CD4-positive, alpha-beta memory T cell (primary cell): ENCODE measurements at regions of chr1 and their contacts with region 1.

Region 1: GRCh38 chr1:54764133-54764921 is at the start of gene PARS2:
- DNase-seq: peak; percentile 92 to 98 (median 98)
- H3K4me3 ChIP-seq: peak within 1 kb of the TSS; percentile 92 to 100
- H3K4me3 Mint-ChIP-seq: peak within 1 kb of the TSS; percentile 92 to 98 (median 94)
- H3K27ac ChIP-seq: peak within 1 kb of the TSS; percentile 71
- H3K27ac Mint-ChIP-seq: peak within 1 kb of the TSS; percentile 84 to 97 (median 93)
- H3K4me1 ChIP-seq: peaks cover 11% of the 10 kb centered on the region
- H3K4me1 Mint-ChIP-seq: peaks cover 8 to 27% (median 19%) of the 10 kb centered on the region in 4 donors
- H3K27me3 ChIP-seq: no peaks in the 10 kb centered on the region
- H3K27me3 Mint-ChIP-seq: no peaks in the 10 kb centered on the region
- total RNA-seq, gene PARS2: 5.0 to 6.0 TPM

Region 2: DNA sequence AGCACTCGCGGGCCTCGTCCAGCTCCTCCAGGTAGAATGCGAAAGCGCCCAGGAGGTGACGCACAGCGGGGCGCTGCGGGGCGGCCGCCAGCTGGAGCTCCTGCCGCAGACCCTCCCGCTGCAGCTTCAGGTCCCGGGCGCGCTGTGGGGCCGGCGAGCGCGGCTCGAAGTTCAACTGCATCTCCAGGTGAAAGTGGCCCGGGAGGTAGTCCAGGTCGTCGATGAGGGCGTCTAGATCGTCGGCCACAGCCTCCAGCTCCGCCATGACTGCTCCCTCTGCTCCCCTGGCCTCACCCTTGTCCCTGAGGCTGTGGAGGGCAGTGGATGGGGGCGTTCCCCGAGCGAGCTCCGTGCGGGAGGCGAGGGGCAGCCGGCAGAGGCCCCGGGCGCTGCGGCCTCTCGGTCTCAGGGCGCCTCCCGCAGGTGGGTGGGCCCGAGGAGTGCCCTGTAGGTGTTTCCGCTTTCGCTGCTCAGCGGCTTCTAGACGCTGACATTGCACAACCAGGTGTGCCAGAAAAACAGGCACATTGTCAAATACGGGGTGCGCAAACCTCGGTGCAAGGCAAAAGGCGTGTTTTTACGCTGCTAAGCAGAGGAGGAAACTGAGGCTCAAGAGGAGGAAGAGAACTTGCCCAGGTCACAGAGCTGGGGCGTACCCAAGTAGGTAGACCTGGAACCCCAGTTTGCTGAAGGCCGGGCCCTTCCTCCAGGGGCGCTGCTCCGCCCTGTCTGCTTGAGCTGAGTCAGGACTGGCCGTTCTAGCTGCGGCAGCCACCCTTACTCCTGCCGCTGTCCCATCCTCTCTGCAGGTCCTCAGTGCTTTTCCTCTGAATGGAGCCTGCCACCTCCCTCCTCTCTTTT is 36.8 kb after region 1 on chr1 and contains the start of gene TTC22:
- CTCF ChIA-PET with region 1: interaction called, 29 read pairs
- POLR2A ChIA-PET with region 1: interaction called, 24 read pairs
- intact Hi-C with region 1: loop called (anchors 2 kb)
- DNase-seq: peak; percentile 65 to 77 (median 70)
- H3K4me3 ChIP-seq: peak within 1 kb of the TSS; percentile 89 to 90
- H3K4me3 Mint-ChIP-seq: peak within 1 kb of the TSS; percentile 90 to 99 (median 96)
- H3K27ac ChIP-seq: peak within 1 kb of the TSS; percentile 68
- H3K27ac Mint-ChIP-seq: peak within 1 kb of the TSS; percentile 89 to 98 (median 96)
- H3K4me1 ChIP-seq: peaks cover 46% of the 10 kb centered on the region
- H3K4me1 Mint-ChIP-seq: peaks cover 40 to 73% (median 57%) of the 10 kb centered on the region in 4 donors
- H3K27me3 ChIP-seq: no peaks in the 10 kb centered on the region
- H3K27me3 Mint-ChIP-seq: no peaks in the 10 kb centered on the region
- total RNA-seq, gene TTC22: 18.6 to 19.0 TPM

Region 3: GRCh38 chr1:54965624-54966340 is 201.5 kb after region 1 on chr1:
- CTCF ChIA-PET with region 1: no interaction called
- POLR2A ChIA-PET with region 1: no interaction called
- intact Hi-C with region 1: no loop called
- DNase-seq: no peak
- H3K4me3 ChIP-seq: no peak overlapping the region
- H3K4me3 Mint-ChIP-seq: peak overlapping the region in 1 of 8 donors; percentile 14
- H3K27ac ChIP-seq: no peak overlapping the region
- H3K27ac Mint-ChIP-seq: no peak overlapping the region
- H3K4me1 ChIP-seq: no peaks in the 10 kb centered on the region
- H3K4me1 Mint-ChIP-seq: peaks cover 5 to 7% (median 6%) of the 10 kb centered on the region in 4 donors
- H3K27me3 ChIP-seq: no peaks in the 10 kb centered on the region
- H3K27me3 Mint-ChIP-seq: peaks cover 13 to 15% of the 10 kb centered on the region in 2 donors

Region 4: DNA sequence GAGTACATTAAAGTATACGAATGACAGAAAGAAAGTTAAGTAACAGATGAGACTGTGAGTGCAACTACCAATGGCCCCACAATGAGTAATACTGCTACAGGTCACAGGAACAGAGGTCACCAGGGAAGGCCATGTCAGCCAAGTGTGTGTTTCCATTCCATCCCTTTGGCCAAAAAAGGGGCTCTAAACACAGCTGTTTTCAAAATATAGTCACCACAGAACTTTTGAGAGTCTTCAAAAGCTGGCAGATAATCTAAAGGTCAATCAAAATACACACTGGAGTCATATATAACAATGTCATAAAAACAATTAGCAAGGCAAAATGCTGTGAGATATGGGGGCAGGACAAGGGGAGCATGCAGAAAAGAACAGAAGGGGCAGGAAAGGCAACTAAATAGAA is 440.7 kb after region 1 on chr1:
- CTCF ChIA-PET with region 1: no interaction called
- POLR2A ChIA-PET with region 1: no interaction called
- intact Hi-C with region 1: no loop called
- DNase-seq: no peak
- H3K4me3 ChIP-seq: no peak overlapping the region
- H3K4me3 Mint-ChIP-seq: peak overlapping the region in 4 of 8 donors; percentile 7 to 67 (median 41)
- H3K27ac ChIP-seq: no peak overlapping the region
- H3K27ac Mint-ChIP-seq: peak overlapping the region in 4 of 7 donors; percentile 0 to 70 (median 36)
- H3K4me1 ChIP-seq: peaks cover 91% of the 10 kb centered on the region
- H3K4me1 Mint-ChIP-seq: peaks cover 52 to 77% (median 65%) of the 10 kb centered on the region in 4 donors
- H3K27me3 ChIP-seq: no peaks in the 10 kb centered on the region
- H3K27me3 Mint-ChIP-seq: no peaks in the 10 kb centered on the region